ENCODE measurements at regions of chr2 and their contacts with region 1.

Region 1: DNA sequence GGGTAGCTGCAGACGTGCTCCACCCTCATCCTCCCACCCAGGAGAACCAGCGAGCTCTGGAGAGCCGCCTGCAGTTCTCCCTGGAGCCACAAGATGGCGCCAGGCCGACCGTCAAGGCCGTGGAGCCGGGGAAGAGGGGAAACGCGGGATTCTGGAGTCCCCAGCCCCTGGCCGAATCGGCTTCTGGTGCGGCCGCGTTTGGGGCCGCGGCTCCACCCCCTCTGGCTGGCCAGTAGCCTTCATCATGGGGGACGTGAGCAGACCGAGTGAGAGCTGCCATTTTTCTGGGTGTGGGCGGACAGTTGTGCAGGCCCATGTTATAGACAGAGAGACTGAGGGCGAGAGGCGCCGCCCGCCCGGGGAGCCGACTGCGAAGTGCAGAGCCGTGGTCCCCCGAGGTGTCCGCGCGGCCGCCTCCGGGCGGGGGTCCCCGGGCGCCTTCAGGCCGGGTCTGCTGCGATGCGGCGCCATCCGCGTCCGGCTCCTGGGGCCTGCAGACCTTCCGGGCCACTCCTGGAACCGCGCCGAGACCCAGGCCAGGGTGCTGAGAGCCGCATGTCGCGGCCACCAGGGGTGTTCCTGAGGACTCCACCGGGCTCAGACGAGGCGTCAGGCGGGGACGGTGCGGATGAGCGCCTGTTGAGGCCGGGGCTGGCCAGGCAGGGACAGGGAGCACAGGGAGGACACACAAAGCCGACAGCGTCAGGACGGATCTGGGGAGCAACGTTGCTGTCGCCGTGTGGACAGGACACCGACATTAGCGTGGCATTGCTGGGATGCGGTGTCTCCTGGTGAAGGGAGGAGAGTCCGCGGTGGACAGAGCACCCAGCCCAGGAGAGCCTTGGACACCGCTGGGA is 418.2 kb upstream of the HS6ST1 start:
- DNase-seq: peak in 1 of 2 donors; percentile 87
- H3K4me3 ChIP-seq: peak overlapping the region; percentile 50 to 58
- H3K27ac ChIP-seq: no peak overlapping the region
- H3K4me1 ChIP-seq: peaks cover 8 to 9% of the 10 kb centered on the region in 2 donors
- H3K27me3 ChIP-seq: no peaks in the 10 kb centered on the region
- CTCF ChIP-seq: peak; percentile 76 to 99 (median 99)

Region 2: GRCh38 chr2:129396980-129397599 is 660.2 kb after region 1 on chr2:
- intact Hi-C with region 1: loop called (anchors 5 kb)
- DNase-seq: no peak
- H3K4me3 ChIP-seq: no peak overlapping the region
- H3K27ac ChIP-seq: no peak overlapping the region
- H3K4me1 ChIP-seq: no peaks in the 10 kb centered on the region
- H3K27me3 ChIP-seq: no peaks in the 10 kb centered on the region
- CTCF ChIP-seq: peak in 2 of 3 experiments; percentile 41 to 63

Measured in ascending aorta (tissue), 2 donors.